ENCODE measurements at regions of chrX and their contacts with region 1.

Region 1: DNA sequence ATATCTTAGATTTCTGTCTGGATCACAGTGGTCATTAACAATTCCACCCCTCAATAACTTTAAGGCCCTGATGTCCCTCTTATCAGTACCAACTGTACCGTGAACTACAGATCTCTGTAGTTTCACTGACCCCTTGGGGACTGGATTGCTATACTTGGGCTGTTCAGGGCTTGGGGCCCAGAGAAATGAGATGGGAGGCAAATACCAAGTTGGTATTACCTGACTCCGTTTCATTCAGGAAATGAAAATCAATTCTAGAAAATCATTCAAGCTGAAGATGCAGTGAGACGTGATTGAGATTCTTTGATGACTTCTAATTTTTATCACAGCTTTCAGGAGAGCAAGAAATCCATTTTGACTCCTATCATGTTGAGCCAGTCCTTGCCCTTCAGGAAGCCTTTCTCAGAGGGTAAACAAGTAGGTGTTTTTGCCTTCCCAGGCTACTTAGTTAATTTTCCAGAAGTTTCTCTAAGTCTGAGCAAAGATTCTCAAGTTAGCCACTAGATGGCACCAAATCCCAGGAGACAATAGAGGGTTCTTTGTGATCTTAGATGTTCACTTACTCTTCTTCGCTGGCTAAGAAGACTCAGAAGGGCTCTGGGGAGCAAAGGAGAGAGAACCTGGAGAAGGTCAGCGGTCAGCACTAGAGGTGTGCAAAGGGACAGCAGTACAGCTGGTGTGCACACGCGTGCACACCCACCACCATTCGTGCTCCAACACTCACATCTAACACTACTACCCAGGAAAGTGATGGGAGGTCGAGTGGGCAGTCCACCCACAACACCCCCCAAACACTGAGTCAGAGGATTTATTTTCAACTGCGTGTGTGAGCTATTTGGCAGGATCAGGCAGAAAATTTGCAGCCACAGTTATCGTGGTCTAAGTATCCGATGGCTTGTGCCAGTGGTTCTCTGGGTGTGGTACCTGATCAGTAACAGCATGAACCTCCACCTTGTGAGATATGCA is 7.4 kb downstream of the HNRNPH2 start:
- DNase-seq: peak in 1 of 2 donors; percentile 86
- ATAC-seq: peak; percentile 70 to 78 (median 76)
- H3K4me3 ChIP-seq: no peak overlapping the region
- H3K4me3 Mint-ChIP-seq: peak overlapping the region; percentile 67
- H3K27ac ChIP-seq: peak overlapping the region; percentile 45
- H3K27ac Mint-ChIP-seq: peak overlapping the region; percentile 73 to 76
- H3K4me1 ChIP-seq: peaks cover 29% of the 10 kb centered on the region
- H3K4me1 Mint-ChIP-seq: peaks cover 23 to 44% of the 10 kb centered on the region in 2 donors
- H3K27me3 ChIP-seq: no peaks in the 10 kb centered on the region
- H3K27me3 Mint-ChIP-seq: no peaks in the 10 kb centered on the region
- CTCF ChIP-seq: peak; percentile 57

Region 2: GRCh38 chrX:101265869-101266428 is 149.5 kb before region 1 on chrX:
- intact Hi-C with region 1: no loop called
- DNase-seq: no peak
- ATAC-seq: no peak
- H3K4me3 ChIP-seq: no peak overlapping the region
- H3K4me3 Mint-ChIP-seq: no peak overlapping the region
- H3K27ac ChIP-seq: no peak overlapping the region
- H3K27ac Mint-ChIP-seq: no peak overlapping the region
- H3K4me1 ChIP-seq: no peaks in the 10 kb centered on the region
- H3K4me1 Mint-ChIP-seq: no peaks in the 10 kb centered on the region
- H3K27me3 ChIP-seq: no peaks in the 10 kb centered on the region
- H3K27me3 Mint-ChIP-seq: peaks cover 0 to 12% of the 10 kb centered on the region in 2 donors
- CTCF ChIP-seq: no peak

Region 3: DNA sequence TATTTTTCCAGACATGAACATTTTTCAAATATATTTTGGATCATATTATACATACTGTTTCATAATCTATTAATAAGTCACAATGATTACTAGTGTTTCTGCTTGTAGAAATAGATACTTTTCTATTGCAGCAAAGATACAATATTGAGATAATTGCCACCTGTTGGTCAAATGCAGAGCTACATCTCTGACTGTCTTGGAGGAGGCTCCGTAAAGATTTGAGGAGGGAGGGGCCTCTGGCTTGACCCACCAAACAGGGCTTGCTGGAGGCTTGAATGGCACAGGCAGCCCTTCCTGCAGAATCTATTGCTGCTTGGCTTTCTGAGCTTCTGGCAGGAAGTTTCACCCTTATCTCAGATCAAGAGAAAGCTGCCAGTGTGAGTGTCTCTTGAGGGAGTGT is 343.5 kb after region 1 on chrX:
- intact Hi-C with region 1: loop called (anchors 2 kb)
- DNase-seq: peak in 1 of 2 donors; percentile 58
- ATAC-seq: peak in 2 of 3 donors; percentile 64 to 74
- H3K4me3 ChIP-seq: no peak overlapping the region
- H3K4me3 Mint-ChIP-seq: no peak overlapping the region
- H3K27ac ChIP-seq: no peak overlapping the region
- H3K27ac Mint-ChIP-seq: no peak overlapping the region
- H3K4me1 ChIP-seq: no peaks in the 10 kb centered on the region
- H3K4me1 Mint-ChIP-seq: no peaks in the 10 kb centered on the region
- H3K27me3 ChIP-seq: no peaks in the 10 kb centered on the region
- H3K27me3 Mint-ChIP-seq: peaks cover 0 to 36% of the 10 kb centered on the region in 2 donors
- CTCF ChIP-seq: peak; percentile 43

Region 4: GRCh38 chrX:101799387-101799786 is 383.9 kb after region 1 on chrX:
- intact Hi-C with region 1: loop called (anchors 2 kb)
- DNase-seq: peak; percentile 40 to 91
- ATAC-seq: peak; percentile 99 to 100 (median 100)
- H3K4me3 ChIP-seq: no peak overlapping the region
- H3K4me3 Mint-ChIP-seq: peak overlapping the region; percentile 15
- H3K27ac ChIP-seq: no peak overlapping the region
- H3K27ac Mint-ChIP-seq: no peak overlapping the region
- H3K4me1 ChIP-seq: no peaks in the 10 kb centered on the region
- H3K4me1 Mint-ChIP-seq: peaks cover 0 to 7% of the 10 kb centered on the region in 2 donors
- H3K27me3 ChIP-seq: no peaks in the 10 kb centered on the region
- H3K27me3 Mint-ChIP-seq: peaks cover 0 to 9% of the 10 kb centered on the region in 2 donors
- CTCF ChIP-seq: peak; percentile 51

Region 5: GRCh38 chrX:101931488-101932248 is 516.2 kb after region 1 on chrX and contains the start of gene ZMAT1:
- intact Hi-C with region 1: loop called (anchors 5 kb)
- DNase-seq: peak; percentile 81 to 95
- ATAC-seq: peak; percentile 83 to 93 (median 84)
- H3K4me3 ChIP-seq: peak within 1 kb of the TSS; percentile 50
- H3K4me3 Mint-ChIP-seq: peak within 1 kb of the TSS; percentile 86
- H3K27ac ChIP-seq: peak within 1 kb of the TSS; percentile 92
- H3K27ac Mint-ChIP-seq: peak within 1 kb of the TSS; percentile 72 to 96
- H3K4me1 ChIP-seq: peaks cover 6% of the 10 kb centered on the region
- H3K4me1 Mint-ChIP-seq: peaks cover 8 to 18% of the 10 kb centered on the region in 2 donors
- H3K27me3 ChIP-seq: no peaks in the 10 kb centered on the region
- H3K27me3 Mint-ChIP-seq: no peaks in the 10 kb centered on the region
- CTCF ChIP-seq: no peak
- total RNA-seq, gene ZMAT1: 13.5 to 14.9 (median 14.3) TPM

Measured in natural killer cell (primary cell).